Calu3 (cell line): ENCODE measurements at regions of chr18 and their contacts with region 1.

Region 1: DNA sequence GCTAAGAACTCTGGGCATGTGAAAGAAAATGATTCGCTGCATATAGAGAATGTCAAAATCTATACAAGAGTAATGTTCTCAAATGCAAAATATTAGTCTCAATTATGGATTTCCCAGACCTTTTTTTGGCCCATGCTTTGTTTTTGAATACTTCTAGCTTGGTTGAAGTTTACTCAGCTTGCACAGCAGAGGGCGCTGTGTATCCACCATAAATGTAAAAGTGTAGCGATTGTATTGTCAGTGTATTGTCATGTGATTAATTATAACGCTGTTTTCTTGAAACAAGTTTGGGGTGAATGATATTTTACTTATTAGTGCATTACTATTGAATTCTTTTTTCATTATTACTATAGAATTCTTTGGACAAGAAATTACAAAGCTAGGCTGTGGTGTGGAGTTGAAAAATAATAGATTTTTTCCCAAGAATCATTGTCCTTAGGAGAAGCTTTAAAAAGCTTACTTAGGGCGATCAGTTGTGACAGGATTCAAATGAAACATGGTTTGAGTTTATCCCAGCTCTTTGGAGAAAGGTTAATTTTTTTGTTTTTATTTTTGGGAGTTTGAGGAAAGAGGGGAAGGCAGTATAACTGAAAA is 98.3 kb downstream of the PIK3C3 start:
- DNase-seq: peak; percentile 62
- H3K4me3 Mint-ChIP-seq: no peak overlapping the region
- H3K27ac Mint-ChIP-seq: no peak overlapping the region
- H3K4me1 Mint-ChIP-seq: no peaks in the 10 kb centered on the region
- H3K27me3 Mint-ChIP-seq: no peaks in the 10 kb centered on the region
- CTCF ChIP-seq: peak; percentile 69

Region 2: DNA sequence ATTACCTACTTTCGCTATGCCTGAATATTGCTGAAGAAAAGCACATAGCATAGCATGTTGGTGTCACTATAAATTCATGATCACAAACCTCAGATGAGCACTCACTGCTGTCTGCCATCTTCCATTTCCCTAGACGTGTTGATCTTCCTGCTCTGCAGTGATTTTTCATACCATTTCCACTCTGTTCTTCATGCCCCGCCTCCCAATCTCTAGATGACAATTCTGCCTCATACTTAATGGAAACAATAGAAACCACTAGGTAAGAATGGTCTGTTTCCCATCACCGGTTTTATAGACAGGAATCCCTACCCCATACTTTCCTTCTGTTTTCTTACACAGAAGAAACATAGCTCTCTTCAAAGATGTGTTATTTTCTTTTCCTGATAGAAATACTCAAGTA is 34.5 kb before region 1 on chr18:
- CTCF ChIA-PET with region 1: no interaction called
- intact Hi-C with region 1: no loop called
- DNase-seq: no peak
- H3K4me3 Mint-ChIP-seq: no peak overlapping the region
- H3K27ac Mint-ChIP-seq: no peak overlapping the region
- H3K4me1 Mint-ChIP-seq: no peaks in the 10 kb centered on the region
- H3K27me3 Mint-ChIP-seq: no peaks in the 10 kb centered on the region
- CTCF ChIP-seq: no peak

Region 3: DNA sequence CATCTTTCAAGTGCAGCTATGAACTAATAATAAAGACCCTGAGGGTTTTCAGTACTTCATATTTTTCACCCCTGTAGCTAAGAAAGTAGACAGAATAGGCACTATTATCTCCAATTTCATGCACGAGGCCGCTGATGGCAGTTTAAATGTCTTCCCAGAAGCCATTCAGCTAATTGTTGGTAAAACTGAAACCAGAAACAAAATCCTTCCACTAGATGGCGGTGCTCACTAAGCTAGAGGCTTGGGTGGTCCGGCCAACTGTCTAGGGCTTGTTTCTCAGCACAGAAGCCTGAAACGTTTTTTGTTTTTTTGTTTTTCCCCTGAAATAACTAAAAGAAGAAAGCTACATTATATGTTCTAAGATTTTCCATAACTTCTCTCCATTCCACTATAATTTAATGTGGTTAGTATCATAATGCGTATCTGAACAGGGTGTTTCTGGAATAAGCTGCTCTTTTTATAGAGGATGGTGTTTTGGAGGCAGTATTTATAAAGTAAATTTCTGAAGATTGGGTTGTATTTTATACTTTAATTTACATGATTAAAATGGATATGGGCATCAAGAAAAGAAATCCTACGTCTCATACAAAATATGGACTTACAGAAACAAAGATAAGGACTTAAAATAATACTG is 61.1 kb after region 1 on chr18:
- CTCF ChIA-PET with region 1: interaction called, 8 read pairs
- intact Hi-C with region 1: loop called (anchors 1 kb)
- DNase-seq: peak; percentile 70
- H3K4me3 Mint-ChIP-seq: no peak overlapping the region
- H3K27ac Mint-ChIP-seq: peak overlapping the region; percentile 83
- H3K4me1 Mint-ChIP-seq: peaks cover 27% of the 10 kb centered on the region
- H3K27me3 Mint-ChIP-seq: no peaks in the 10 kb centered on the region
- CTCF ChIP-seq: peak; percentile 78

Region 4: GRCh38 chr18:42274488-42275137 is 221.3 kb after region 1 on chr18:
- CTCF ChIA-PET with region 1: no interaction called
- intact Hi-C with region 1: loop called (anchors 2 kb)
- DNase-seq: no peak
- H3K4me3 Mint-ChIP-seq: no peak overlapping the region
- H3K27ac Mint-ChIP-seq: no peak overlapping the region
- H3K4me1 Mint-ChIP-seq: no peaks in the 10 kb centered on the region
- H3K27me3 Mint-ChIP-seq: no peaks in the 10 kb centered on the region
- CTCF ChIP-seq: no peak

Region 5: GRCh38 chr18:43067570-43067969 is 1014.3 kb after region 1 on chr18:
- CTCF ChIA-PET with region 1: no interaction called
- intact Hi-C with region 1: no loop called
- DNase-seq: no peak
- H3K4me3 Mint-ChIP-seq: no peak overlapping the region
- H3K27ac Mint-ChIP-seq: no peak overlapping the region
- H3K4me1 Mint-ChIP-seq: no peaks in the 10 kb centered on the region
- H3K27me3 Mint-ChIP-seq: no peaks in the 10 kb centered on the region
- CTCF ChIP-seq: no peak

Region 6: GRCh38 chr18:43271593-43272432 is 1218.5 kb after region 1 on chr18:
- CTCF ChIA-PET with region 1: no interaction called
- intact Hi-C with region 1: loop called (anchors 2 kb)
- DNase-seq: peak; percentile 46
- H3K4me3 Mint-ChIP-seq: no peak overlapping the region
- H3K27ac Mint-ChIP-seq: no peak overlapping the region
- H3K4me1 Mint-ChIP-seq: no peaks in the 10 kb centered on the region
- H3K27me3 Mint-ChIP-seq: peaks cover 13% of the 10 kb centered on the region
- CTCF ChIP-seq: peak; percentile 57

Region 7: GRCh38 chr18:43396266-43396665 is 1343.0 kb after region 1 on chr18:
- CTCF ChIA-PET with region 1: no interaction called
- intact Hi-C with region 1: loop called (anchors 5 kb)
- DNase-seq: no peak
- H3K4me3 Mint-ChIP-seq: no peak overlapping the region
- H3K27ac Mint-ChIP-seq: no peak overlapping the region
- H3K4me1 Mint-ChIP-seq: no peaks in the 10 kb centered on the region
- H3K27me3 Mint-ChIP-seq: no peaks in the 10 kb centered on the region
- CTCF ChIP-seq: no peak

Region 8: DNA sequence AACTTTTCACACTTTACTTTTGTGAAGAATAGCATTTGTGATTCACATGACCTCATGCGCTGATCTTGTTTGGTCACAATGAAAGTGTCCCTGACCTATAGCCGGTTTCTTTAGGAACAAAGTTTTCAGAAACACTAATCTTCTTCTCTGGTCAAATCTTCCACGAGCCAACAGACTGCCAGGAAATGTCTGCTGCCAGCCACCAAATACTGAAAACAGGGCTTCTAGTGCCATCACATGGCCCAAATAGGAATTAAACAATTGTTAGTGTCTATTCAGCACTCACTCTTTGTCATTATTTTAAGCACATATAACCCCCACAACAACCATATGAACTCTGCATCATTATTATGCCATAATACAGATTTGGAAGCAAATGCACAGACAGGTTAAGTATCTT is 1510.5 kb after region 1 on chr18:
- CTCF ChIA-PET with region 1: no interaction called
- intact Hi-C with region 1: loop called (anchors 10 kb)
- DNase-seq: peak; percentile 51
- H3K4me3 Mint-ChIP-seq: no peak overlapping the region
- H3K27ac Mint-ChIP-seq: no peak overlapping the region
- H3K4me1 Mint-ChIP-seq: peaks cover 10% of the 10 kb centered on the region
- H3K27me3 Mint-ChIP-seq: peaks cover 19% of the 10 kb centered on the region
- CTCF ChIP-seq: peak; percentile 47

Region 9: DNA sequence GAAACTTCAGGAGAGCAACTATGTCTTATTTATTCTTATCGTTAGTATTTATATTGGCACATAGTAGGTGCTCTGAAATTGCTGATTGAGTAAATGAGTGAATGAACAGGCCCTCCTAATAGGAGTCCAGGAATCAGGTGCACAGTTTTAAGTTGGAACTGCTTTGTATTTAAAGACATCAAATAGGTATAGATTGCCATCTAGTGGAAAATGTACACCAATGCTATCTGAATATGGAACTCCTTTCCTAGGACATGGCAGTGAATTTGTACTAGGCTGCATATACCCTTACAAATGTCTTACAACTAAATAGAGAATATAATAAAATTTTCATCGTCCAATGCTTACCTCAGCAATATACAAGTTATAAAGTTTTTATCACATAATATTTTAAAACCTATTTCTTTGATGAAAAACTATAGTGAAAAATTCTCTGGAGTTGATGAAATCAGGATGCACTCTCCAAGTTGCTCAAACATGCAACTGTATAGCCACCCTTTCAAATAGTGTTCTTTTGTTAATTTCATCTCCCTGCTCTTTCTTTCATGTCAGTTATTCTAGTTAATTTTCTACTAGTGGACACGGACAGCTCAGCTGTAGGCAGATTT is 1542.9 kb after region 1 on chr18:
- CTCF ChIA-PET with region 1: no interaction called
- intact Hi-C with region 1: loop called (anchors 5 kb)
- DNase-seq: no peak
- H3K4me3 Mint-ChIP-seq: no peak overlapping the region
- H3K27ac Mint-ChIP-seq: no peak overlapping the region
- H3K4me1 Mint-ChIP-seq: no peaks in the 10 kb centered on the region
- H3K27me3 Mint-ChIP-seq: no peaks in the 10 kb centered on the region
- CTCF ChIP-seq: no peak